ENCODE measurements at regions of chr4 and their contacts with region 1.

Region 1: DNA sequence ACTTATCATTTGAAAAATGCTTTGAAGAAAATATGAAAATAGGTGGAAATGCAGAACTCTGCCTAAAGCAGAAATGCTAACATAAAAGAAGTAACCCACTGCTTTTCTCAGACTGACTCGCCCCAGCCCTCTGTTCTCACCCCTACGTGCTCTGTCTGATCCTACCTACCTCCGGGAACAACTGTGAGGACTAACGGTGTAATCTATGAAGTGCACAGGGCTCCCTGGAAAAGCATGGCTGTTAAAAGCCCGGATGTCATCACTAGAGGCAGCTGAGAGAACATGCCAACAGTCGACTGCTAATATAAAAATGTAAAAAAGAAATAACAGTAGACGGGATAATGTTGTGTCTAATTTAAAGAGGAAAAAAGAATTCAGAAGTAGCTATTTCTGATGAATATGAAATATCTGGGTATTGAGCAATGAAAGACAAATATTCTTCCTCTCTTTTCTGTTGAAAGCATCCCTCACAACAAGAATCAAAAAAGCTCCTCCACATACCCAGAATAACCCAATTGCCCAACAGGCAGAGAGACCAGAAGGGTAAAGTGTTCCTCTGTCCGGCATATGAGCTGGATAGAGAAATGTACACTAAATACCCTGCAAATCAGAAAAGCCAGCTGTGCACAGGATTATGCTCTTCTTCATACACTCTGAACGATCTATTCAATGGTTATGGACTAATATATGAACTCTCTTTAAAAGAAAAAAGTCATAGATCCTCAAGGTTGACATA is 130.7 kb downstream of the TSPAN5 start:
- DNase-seq: no peak
- CTCF ChIP-seq: no peak

Region 2: DNA sequence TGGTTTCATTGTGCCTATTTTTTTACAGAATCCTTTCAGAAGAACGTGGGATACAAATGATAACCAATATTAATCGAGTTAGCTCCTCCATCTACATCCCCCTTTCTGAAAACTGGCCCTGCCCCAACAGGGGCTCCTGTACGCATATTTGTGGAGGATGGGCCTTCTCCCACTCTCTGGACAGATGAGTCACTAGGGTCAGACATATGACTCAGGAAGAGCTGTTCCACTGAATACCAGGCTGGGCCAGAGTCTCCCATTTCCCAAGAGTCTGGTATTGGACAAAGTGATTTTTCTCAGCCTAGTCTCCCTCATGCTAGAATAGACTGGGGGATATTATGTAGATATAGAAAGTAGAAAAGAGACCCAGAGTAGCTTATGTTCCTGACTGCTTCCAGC is 11.7 kb before region 1 on chr4:
- CTCF ChIA-PET with region 1: interaction called, 11 read pairs
- POLR2A ChIA-PET with region 1: no interaction called
- DNase-seq: no peak
- CTCF ChIP-seq: no peak

Region 3: GRCh38 chr4:98688411-98689290 is 160.9 kb after region 1 on chr4:
- CTCF ChIA-PET with region 1: no interaction called
- POLR2A ChIA-PET with region 1: no interaction called
- DNase-seq: no peak
- CTCF ChIP-seq: no peak

Region 4: DNA sequence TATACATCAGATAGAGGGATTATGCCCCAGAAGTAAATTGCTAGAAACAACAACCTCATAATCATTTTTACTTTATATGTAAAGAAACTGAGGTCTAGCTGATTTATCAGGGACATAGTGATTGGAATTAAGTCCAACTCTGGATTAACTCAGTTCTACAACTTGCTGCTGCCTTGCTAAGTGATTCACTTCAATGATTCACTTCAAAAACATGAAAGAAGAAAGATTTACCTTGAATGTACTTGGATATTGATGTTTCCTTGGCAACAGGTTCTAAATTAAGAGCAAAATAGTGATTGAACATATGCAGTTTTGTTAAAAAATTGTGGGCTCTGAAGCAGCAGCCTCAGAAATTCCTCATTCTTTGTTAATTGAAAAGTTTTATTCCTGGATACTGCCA is 1522.2 kb after region 1 on chr4:
- CTCF ChIA-PET with region 1: no interaction called
- POLR2A ChIA-PET with region 1: no interaction called
- DNase-seq: no peak
- CTCF ChIP-seq: no peak